Mammary epithelial cell (primary cell): ENCODE measurements at regions of chr11 and their contacts with region 1.

Region 1: DNA sequence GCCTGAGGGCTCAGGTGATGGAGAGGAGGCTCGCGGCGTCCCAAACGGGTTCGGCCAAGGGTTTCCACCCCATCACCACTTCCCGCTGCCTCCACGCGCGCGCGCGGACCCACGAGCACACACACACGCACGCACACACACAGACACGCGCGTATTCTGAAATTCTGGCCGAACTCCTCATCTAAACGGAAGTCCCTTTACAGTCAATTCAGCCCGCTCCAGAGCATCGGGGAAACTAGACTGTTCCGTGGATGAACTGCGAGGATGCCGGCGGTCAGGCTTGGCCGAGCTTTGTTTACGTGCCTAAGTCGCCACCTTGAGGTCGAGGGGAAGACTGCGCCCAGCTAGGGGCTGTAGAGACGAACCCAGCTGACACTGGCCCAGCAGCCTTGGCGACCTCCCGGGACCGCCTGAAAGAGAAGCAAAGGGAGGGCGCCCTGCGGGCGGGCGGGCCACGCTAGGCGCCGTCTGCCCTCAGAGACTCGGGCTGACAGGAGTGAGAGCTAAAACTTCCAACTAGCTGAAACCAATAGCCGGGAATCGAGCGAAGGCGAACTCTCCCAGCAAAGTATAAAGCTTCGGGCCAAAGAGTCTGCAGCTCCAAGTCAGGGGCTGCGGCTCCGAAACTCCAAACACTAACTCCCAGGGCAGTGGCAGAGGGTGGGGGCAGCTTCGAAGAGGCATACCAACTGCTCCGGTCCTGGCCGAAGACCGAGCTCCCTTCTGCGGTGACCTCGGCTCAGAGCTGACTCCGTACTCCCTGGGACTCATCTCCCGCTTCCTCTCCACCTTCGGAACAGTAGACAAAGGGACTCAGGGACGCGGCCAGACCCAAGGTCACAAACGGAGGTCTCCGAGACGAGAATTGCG is 124.7 kb upstream of the C11orf58 start:
- DNase-seq: peak; percentile 72
- H3K4me3 ChIP-seq: peak overlapping the region; percentile 42 to 51 (median 49)
- H3K27ac ChIP-seq: no peak overlapping the region
- H3K4me1 ChIP-seq: peaks cover 12% of the 10 kb centered on the region
- H3K27me3 ChIP-seq: peaks cover 44% of the 10 kb centered on the region
- CTCF ChIP-seq: peak; percentile 88 to 90

Region 2: DNA sequence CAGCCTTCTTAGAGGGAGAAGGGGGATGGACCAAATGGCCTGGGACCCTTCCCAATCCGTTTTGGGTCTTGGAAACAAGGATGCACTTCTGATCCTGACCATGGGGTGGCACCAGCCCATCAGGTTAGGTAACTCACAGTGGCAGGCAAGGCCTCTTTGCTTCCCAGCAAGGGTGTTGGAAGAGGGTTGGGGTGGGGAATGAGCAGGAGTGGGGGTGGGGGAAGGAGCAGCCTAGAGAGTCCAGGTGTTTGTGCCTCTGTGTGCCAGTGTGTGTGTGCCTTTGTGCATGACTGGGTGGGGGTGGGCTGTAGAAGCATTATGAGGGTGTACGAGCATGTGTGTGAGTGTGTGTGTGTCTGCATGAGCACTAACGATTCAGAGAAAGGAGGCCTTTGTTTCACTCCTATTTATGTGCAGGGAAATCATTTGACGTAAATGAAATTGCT is 1285.9 kb before region 1 on chr11:
- CTCF ChIA-PET with region 1: no interaction called
- dilution Hi-C with region 1: no loop called
- in situ Hi-C with region 1: no loop called
- intact Hi-C with region 1: loop called (anchors 1 kb)
- DNase-seq: peak; percentile 27
- H3K4me3 ChIP-seq: no peak overlapping the region
- H3K27ac ChIP-seq: no peak overlapping the region
- H3K4me1 ChIP-seq: no peaks in the 10 kb centered on the region
- H3K27me3 ChIP-seq: no peaks in the 10 kb centered on the region
- CTCF ChIP-seq: peak; percentile 32 to 56

Region 3: DNA sequence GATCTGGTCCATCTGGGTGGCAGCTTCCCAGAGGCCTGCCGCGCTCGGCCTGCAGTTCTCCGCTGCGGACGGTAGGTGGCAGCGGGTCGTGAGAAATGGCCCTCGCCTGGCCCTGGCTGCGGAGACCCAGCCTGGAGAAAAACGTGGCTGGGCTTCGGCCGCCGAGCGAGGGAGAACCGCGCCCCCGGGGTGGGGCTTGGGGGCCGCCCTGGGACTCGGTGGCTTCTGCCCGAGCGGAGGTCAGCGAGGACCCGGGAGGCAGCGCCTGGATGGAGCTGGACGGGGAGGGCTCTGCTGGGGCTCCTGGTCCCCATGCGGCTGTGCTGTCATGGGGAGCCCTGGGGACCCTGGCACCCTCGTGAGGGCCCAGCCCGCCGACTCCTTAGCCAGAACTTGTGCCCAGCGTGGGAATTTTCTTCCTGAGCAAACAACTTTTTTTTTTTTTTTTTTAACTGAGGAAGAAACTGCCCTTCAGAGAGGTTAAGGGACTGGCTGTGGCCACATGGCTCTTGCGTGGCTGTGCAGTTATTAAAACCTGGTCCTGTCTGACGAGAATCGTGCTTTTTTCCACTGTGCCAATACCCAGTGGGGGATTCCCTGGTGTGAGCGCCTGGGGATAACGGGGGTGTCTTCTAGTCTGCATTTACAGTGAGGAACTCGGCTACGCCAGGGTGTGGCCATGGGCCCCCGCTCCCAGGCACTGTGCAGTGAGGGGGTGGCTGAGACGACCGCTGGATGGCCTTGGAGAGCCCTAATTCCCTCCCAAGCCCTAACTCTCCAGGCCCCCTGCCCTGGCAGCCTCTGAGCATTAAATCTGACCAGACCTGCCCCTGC is 963.4 kb before region 1 on chr11:
- CTCF ChIA-PET with region 1: interaction called, 5 read pairs
- dilution Hi-C with region 1: no loop called
- in situ Hi-C with region 1: no loop called
- intact Hi-C with region 1: loop called (anchors 1 kb)
- DNase-seq: peak; percentile 88
- H3K4me3 ChIP-seq: peak overlapping the region; percentile 32 to 48 (median 35)
- H3K27ac ChIP-seq: peak overlapping the region; percentile 19
- H3K4me1 ChIP-seq: peaks cover 5% of the 10 kb centered on the region
- H3K27me3 ChIP-seq: no peaks in the 10 kb centered on the region
- CTCF ChIP-seq: peak; percentile 78 to 96

Region 4: GRCh38 chr11:15770798-15771414 is 842.8 kb before region 1 on chr11:
- CTCF ChIA-PET with region 1: no interaction called
- dilution Hi-C with region 1: no loop called
- in situ Hi-C with region 1: loop called in 1 of 2 experiments (anchors 25 kb)
- intact Hi-C with region 1: loop called (anchors 2 kb)
- DNase-seq: peak; percentile 28
- H3K4me3 ChIP-seq: no peak overlapping the region
- H3K27ac ChIP-seq: no peak overlapping the region
- H3K4me1 ChIP-seq: no peaks in the 10 kb centered on the region
- H3K27me3 ChIP-seq: peaks cover 3% of the 10 kb centered on the region
- CTCF ChIP-seq: peak; percentile 57 to 81

Region 5: GRCh38 chr11:15819679-15820286 is 794.0 kb before region 1 on chr11:
- CTCF ChIA-PET with region 1: no interaction called
- dilution Hi-C with region 1: no loop called
- in situ Hi-C with region 1: no loop called
- intact Hi-C with region 1: loop called (anchors 1 kb)
- DNase-seq: peak; percentile 64
- H3K4me3 ChIP-seq: no peak overlapping the region
- H3K27ac ChIP-seq: no peak overlapping the region
- H3K4me1 ChIP-seq: peaks cover 27% of the 10 kb centered on the region
- H3K27me3 ChIP-seq: no peaks in the 10 kb centered on the region
- CTCF ChIP-seq: peak; percentile 97 to 98

Region 6: DNA sequence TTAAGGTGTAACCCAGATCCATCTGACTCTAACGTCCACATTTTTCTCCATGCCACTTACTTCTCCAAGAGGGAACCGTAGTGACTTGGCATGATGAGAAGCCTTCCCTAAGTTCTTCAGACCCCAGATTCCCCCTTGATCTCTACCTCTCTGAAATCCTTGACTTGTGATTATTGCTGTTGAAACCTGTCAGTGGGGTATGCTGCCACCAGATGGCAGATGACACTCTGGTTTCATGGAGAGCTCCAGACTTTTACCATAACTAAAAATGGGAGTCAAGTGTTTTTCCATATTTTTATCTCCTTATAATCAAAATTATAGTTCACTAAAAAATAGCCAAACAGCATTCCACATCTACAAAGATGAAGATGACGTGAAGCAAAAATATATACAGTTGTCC is 761.6 kb before region 1 on chr11:
- CTCF ChIA-PET with region 1: interaction called, 19 read pairs
- dilution Hi-C with region 1: no loop called
- in situ Hi-C with region 1: loop called in 1 of 2 experiments (anchors 25 kb)
- intact Hi-C with region 1: loop called (anchors 1 kb)
- DNase-seq: peak; percentile 21
- H3K4me3 ChIP-seq: no peak overlapping the region
- H3K27ac ChIP-seq: no peak overlapping the region
- H3K4me1 ChIP-seq: no peaks in the 10 kb centered on the region
- H3K27me3 ChIP-seq: no peaks in the 10 kb centered on the region
- CTCF ChIP-seq: peak; percentile 42 to 73

Region 7: GRCh38 chr11:16685914-16686313 is 72.2 kb after region 1 on chr11:
- CTCF ChIA-PET with region 1: no interaction called
- dilution Hi-C with region 1: no loop called
- in situ Hi-C with region 1: no loop called
- intact Hi-C with region 1: no loop called
- DNase-seq: no peak
- H3K4me3 ChIP-seq: no peak overlapping the region
- H3K27ac ChIP-seq: no peak overlapping the region
- H3K4me1 ChIP-seq: no peaks in the 10 kb centered on the region
- H3K27me3 ChIP-seq: peaks cover 2% of the 10 kb centered on the region
- CTCF ChIP-seq: no peak